ENCODE measurements at regions of chr4 and their contacts with region 1.

Region 1: DNA sequence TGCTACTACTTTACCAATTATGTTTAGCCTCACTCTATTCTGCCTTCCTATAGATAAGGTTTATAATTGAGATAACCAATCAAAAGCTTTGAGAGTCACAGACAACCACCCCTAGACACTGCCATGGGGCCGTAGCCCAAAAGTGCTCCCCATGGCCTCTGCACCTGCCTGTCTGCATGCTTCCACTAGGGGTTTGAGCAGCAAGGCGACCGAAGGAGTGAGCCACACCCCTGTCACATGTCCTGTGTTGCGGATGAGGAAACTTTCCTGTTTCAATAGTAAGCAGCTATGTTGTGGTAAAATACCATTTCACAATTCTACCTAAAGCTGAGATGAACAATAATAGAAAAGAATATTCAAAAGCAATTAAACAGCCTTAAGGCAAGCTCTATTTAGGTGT is 856.0 kb upstream of the FRG1 start:
- DNase-seq: no peak
- H3K4me3 ChIP-seq: no peak overlapping the region
- H3K27ac ChIP-seq: no peak overlapping the region
- H3K4me1 ChIP-seq: peaks cover 0 to 2% (median 0%) of the 10 kb centered on the region in 4 experiments; a peak in 1 of 7 replicates
- H3K27me3 ChIP-seq: no peaks in the 10 kb centered on the region
- CTCF ChIP-seq: peak; percentile 33 to 64 (median 55)
- EP300 ChIP-seq: no peak
- POLR2A ChIP-seq: no peak
- RAD21 ChIP-seq: peak; percentile 18 to 46; a peak in 3 of 4 replicates

Region 2: DNA sequence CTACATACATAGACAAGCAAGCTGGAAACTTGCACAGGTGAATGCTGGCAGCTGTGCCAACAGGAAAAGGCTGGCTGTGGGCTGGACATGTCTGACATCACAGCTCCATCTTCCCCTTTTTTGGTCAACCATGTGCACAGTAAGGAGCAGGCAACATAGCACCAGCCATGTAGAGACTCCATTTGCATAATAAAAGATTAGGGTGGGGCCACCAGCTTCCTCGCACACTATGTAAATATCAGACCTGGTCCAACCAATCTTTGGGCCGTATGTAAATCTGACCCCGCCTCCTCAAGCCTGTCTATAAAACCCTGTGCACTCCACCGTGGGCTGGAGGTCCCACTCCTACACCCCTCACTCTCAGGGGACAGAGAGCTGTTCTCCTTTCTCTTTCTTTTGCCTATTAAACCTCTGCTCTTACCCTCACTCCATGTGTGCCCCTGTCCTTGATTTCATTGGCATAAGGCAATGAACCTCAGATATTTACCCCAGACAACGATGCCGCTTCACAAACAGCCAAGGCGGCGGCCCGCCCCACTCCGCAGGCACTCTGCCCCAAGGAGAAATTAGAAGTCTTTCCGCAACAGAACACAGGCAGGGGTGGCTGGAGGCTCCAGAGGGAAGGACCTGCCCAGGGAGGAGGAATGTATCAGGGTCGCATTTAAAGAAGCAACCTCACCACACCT is 83.2 kb before region 1 on chr4:
- CTCF ChIA-PET with region 1: no interaction called
- POLR2A ChIA-PET with region 1: no interaction called
- DNase-seq: no peak
- H3K4me3 ChIP-seq: no peak overlapping the region
- H3K27ac ChIP-seq: no peak overlapping the region
- H3K4me1 ChIP-seq: no peaks in the 10 kb centered on the region
- H3K27me3 ChIP-seq: no peaks in the 10 kb centered on the region
- CTCF ChIP-seq: no peak
- EP300 ChIP-seq: no peak
- POLR2A ChIP-seq: no peak
- RAD21 ChIP-seq: no peak

Region 3: GRCh38 chr4:189071241-189071640 is 13.4 kb before region 1 on chr4:
- CTCF ChIA-PET with region 1: interaction called, 10 read pairs
- POLR2A ChIA-PET with region 1: no interaction called
- DNase-seq: no peak
- H3K4me3 ChIP-seq: no peak overlapping the region
- H3K27ac ChIP-seq: no peak overlapping the region
- H3K4me1 ChIP-seq: no peaks in the 10 kb centered on the region
- H3K27me3 ChIP-seq: no peaks in the 10 kb centered on the region
- CTCF ChIP-seq: no peak
- EP300 ChIP-seq: no peak
- POLR2A ChIP-seq: no peak
- RAD21 ChIP-seq: no peak